Head of caudate nucleus (tissue), 42 donors: ENCODE measurements at regions of chr3 and their contacts with region 1.

Region 1: DNA sequence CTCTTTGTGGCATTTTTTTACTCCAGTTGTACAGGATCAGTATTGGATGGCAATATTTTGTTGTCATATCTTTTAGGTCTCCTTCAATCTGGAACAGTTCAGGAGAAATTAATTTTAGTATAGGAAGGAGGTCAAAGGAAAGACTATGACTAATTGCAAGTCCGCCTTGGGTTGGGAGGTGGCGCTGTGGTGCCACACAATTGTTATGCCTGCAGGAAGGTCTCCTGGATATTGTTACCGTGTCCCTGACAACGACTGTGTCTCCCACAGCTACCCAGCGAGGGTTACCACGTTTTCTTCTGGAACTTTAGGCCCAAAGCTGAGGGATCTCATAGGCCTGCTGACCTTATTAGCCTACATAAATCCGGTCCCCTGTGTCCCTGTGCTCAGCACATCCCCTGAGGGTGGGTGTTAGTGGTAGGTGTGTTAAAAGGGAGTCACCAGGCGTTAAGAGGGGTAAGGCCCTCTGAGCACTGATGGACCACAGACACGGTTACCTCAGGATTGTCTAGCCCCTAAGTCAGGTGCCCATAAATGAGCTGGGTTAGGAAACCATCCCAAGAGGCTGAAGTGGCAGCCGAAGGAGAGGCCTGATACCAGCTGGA is 31.5 kb downstream of the KCNAB1 start:
- DNase-seq: peak; percentile 53 to 89 (median 76)

Region 2: DNA sequence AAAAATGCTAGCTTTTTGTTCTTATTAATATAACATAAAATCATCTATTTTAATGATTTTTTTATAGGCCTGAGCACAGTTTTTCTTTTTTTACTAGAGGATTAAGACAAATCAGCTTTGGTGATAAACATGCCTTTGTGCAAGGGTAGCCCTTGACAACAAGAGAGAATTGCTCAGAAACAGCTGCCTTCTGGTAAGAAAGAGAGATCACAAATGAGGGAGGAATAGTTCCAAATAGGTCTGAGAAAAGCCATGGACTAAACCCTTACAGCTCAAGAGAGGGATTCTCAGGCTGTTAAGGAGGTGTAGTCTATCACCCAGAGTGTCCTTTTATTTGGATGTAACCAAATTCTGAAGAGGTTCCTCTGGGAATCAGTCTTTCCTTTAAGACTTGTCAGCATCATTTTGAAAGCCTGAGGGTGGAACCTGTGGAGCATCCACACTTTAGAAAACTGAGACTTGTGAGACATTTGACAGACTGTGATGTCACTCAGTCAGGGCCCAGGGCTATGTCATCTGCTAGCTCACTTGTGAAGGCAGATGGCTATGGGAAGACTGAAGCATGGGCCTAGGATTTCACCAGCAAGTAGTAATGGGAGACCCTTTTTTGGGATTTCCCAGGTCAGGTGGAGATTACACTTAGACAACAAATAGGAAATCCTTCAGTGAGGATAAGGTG is 134.4 kb before region 1 on chr3:
- intact Hi-C with region 1: loop called (anchors 10 kb)
- DNase-seq: no peak

Region 3: GRCh38 chr3:156171281-156172267 is 19.6 kb after region 1 on chr3:
- intact Hi-C with region 1: no loop called
- DNase-seq: no peak

Region 4: DNA sequence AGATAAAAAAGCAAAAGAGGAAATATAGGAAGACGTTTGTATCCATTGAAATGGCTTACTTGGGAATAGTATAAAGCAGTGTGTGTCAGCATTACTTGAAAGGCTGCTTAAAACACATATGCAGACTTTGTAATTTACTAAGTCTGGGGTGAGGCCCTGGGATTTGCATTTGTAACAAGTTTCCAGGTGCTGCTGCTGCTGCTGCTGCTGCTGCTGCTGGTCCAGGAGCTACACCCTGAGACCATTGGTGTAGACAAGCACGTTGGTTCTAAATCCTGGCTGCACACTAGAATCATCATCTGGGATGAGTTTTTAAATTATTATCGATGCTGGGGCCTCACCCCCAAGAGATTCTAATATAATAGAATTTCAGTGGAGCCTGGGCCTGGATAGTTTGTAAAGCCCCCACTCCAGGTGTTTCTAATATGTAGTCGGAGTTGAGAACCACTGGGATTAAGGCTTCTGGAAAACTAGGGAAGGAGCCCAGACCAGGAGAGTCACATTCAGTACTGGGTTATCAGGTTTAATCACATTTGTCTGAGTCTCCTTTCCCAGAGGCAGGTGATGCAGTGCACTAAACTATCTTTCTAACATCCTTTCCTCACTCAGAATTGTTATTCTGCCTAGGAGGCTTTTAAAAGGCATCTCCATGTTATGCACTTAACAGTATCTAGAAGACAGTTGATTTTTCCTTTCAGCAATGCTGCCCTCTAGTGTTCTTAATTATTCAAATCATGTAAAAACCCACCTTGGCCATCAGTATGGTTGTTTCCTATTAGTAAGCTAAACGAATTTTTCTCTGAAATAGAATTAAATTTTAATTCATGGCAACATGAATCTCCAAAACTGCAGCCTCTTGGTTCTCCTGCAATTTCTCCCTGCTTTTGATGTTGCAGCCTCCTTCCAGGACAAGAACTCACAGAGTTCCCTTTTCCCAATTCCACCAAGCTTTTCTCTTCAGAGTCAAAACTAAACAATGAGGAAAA is 357.6 kb after region 1 on chr3:
- intact Hi-C with region 1: loop called (anchors 2 kb)
- DNase-seq: peak in 1 of 42 donors; percentile 53

Region 5: GRCh38 chr3:156535162-156535627 is 383.3 kb after region 1 on chr3:
- intact Hi-C with region 1: loop called (anchors 5 kb)
- DNase-seq: peak in 38 of 42 donors; percentile 24 to 90 (median 60)